Activated CD4-positive, alpha-beta memory T cell treated with anti-CD3 and anti-CD28 coated beads, Interleukin-2, amount 10 ng/mL, durations not matched to agents 7 days and 5 days (primary cell): ENCODE measurements at regions of chr14 and their contacts with region 1.

Region 1: GRCh38 chr14:75709207-75709812 is 48.3 kb downstream of the TTLL5 start:
- DNase-seq: peak; percentile 70
- H3K4me3 Mint-ChIP-seq: no peak overlapping the region
- H3K27ac Mint-ChIP-seq: no peak overlapping the region
- H3K4me1 Mint-ChIP-seq: no peaks in the 10 kb centered on the region
- H3K27me3 Mint-ChIP-seq: no peaks in the 10 kb centered on the region

Region 2: DNA sequence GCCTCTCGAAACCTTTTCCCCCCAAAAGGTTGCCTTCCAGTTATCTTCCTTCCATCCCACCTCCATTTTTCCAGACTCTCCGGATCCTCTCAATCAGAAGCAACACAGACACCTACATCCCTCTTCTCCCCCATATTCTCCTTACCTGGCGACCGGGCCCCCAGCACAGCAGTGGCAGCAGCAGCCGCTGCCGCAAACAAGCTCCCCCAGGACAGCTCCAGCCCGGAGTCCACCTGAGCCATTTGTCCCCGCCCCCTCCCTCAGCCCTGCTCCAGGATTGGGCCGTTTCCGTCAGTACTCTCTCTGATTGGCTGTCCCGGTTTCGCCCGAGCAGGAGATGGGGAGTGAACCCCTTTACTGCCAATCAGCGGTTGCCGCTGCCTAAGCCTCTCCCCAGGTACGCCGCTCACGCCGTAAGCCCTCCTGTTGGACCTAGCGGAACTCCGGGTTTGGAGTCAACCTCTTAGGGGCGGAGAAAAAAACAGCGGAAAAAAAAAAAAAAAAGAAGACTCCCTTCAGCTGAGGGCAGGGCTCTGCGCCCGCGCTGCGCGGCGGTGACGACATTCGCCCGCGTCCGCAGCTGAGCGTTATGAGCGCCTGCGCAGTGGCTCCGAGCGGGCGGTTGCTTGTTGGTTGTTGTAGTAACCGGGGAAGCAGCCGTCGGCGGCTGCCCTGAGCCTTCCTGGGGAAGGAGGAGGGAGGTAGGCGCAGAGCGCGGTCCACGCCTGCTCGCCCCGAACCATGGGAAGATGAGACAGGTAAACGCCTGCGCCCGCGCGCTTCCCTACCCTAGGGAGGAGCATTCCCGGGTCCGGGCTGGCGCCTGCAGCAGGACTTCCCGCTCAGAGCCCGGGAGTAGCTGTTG is 48.4 kb before region 1 on chr14 and contains the starts of genes ERG28 and TTLL5:
- CTCF ChIA-PET with region 1: interaction called, 14 read pairs
- POLR2A ChIA-PET with region 1: no interaction called
- DNase-seq: peak; percentile 98
- H3K4me3 Mint-ChIP-seq: peak within 1 kb of the TSS; percentile 95
- H3K27ac Mint-ChIP-seq: peak within 1 kb of the TSS; percentile 90
- H3K4me1 Mint-ChIP-seq: peaks cover 36% of the 10 kb centered on the region
- H3K27me3 Mint-ChIP-seq: no peaks in the 10 kb centered on the region
- total RNA-seq, gene ERG28: 26.9 to 29.4 TPM
- total RNA-seq, gene TTLL5: 30.6 to 33.1 TPM

Region 3: DNA sequence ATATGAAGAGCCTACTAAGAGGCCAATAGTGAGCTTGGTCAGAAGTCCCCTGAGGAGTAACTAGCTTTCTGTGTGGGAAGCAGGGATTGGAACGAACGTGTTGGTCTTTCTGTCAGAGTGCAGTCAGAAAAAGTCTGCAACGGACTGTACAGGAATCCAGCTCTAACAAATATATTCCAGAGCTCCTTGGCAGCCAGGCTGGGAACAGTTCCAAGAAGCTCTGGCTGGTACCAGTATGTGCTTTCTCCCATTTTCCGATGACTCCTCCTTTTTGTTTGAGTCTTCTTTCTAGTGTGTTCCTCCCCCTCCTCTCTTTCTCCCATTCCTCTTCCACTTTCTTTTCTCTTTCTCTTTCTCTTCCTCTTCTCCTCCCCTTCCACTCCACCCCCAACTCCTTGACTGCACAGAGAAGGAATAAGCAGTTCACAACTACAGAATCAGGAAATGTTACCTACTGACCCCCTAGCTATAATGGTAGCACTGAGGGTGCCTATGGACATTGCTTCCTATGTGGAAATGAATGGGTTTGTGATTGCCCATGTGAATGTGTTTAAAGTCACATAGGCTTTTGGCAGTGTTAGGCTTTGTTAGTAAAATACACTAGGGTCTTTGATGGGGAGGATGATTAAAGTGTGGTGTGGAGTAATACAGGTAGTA is 11.7 kb after region 1 on chr14:
- CTCF ChIA-PET with region 1: interaction called, 10 read pairs
- POLR2A ChIA-PET with region 1: no interaction called
- DNase-seq: no peak
- H3K4me3 Mint-ChIP-seq: no peak overlapping the region
- H3K27ac Mint-ChIP-seq: no peak overlapping the region
- H3K4me1 Mint-ChIP-seq: peaks cover 25% of the 10 kb centered on the region
- H3K27me3 Mint-ChIP-seq: no peaks in the 10 kb centered on the region

Region 4: GRCh38 chr14:75764022-75764421 is 54.7 kb after region 1 on chr14:
- CTCF ChIA-PET with region 1: no interaction called
- POLR2A ChIA-PET with region 1: no interaction called
- DNase-seq: no peak
- H3K4me3 Mint-ChIP-seq: no peak overlapping the region
- H3K27ac Mint-ChIP-seq: no peak overlapping the region
- H3K4me1 Mint-ChIP-seq: no peaks in the 10 kb centered on the region
- H3K27me3 Mint-ChIP-seq: no peaks in the 10 kb centered on the region

Region 5: GRCh38 chr14:75794615-75795038 is 85.3 kb after region 1 on chr14:
- CTCF ChIA-PET with region 1: interaction called, 18 read pairs
- POLR2A ChIA-PET with region 1: no interaction called
- DNase-seq: no peak
- H3K4me3 Mint-ChIP-seq: no peak overlapping the region
- H3K27ac Mint-ChIP-seq: no peak overlapping the region
- H3K4me1 Mint-ChIP-seq: no peaks in the 10 kb centered on the region
- H3K27me3 Mint-ChIP-seq: no peaks in the 10 kb centered on the region

Region 6: GRCh38 chr14:75982266-75983018 is 273.1 kb after region 1 on chr14:
- CTCF ChIA-PET with region 1: interaction called, 182 read pairs
- POLR2A ChIA-PET with region 1: interaction called, 10 read pairs
- DNase-seq: peak; percentile 79
- H3K4me3 Mint-ChIP-seq: peak overlapping the region; percentile 74
- H3K27ac Mint-ChIP-seq: peak overlapping the region; percentile 47
- H3K4me1 Mint-ChIP-seq: peaks cover 49% of the 10 kb centered on the region
- H3K27me3 Mint-ChIP-seq: peaks cover 16% of the 10 kb centered on the region

Region 7: DNA sequence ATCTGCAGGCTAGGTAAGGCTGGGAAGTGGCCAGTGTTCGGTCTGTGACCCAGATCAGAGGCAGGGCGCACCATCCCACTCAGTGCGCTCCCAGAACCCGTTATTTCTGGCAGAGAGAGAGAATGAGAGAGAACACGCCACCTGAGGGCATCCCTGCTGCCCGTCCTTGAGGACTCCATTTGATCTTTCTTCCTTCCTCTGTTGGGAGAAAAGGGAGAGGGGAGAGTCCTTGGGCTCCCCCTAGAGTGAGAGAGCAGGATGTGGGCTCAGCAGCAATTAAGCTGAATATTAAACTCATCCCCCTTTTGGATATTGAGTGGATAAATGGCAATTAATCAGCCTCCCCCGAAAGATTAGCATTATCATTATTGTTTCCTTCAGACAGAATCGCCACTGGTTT is 346.8 kb after region 1 on chr14:
- CTCF ChIA-PET with region 1: interaction called, 11 read pairs
- POLR2A ChIA-PET with region 1: no interaction called
- DNase-seq: no peak
- H3K4me3 Mint-ChIP-seq: no peak overlapping the region
- H3K27ac Mint-ChIP-seq: no peak overlapping the region
- H3K4me1 Mint-ChIP-seq: no peaks in the 10 kb centered on the region
- H3K27me3 Mint-ChIP-seq: no peaks in the 10 kb centered on the region